GM12878 (cell line): ENCODE measurements at regions of chr21 and their contacts with region 1.

Region 1: DNA sequence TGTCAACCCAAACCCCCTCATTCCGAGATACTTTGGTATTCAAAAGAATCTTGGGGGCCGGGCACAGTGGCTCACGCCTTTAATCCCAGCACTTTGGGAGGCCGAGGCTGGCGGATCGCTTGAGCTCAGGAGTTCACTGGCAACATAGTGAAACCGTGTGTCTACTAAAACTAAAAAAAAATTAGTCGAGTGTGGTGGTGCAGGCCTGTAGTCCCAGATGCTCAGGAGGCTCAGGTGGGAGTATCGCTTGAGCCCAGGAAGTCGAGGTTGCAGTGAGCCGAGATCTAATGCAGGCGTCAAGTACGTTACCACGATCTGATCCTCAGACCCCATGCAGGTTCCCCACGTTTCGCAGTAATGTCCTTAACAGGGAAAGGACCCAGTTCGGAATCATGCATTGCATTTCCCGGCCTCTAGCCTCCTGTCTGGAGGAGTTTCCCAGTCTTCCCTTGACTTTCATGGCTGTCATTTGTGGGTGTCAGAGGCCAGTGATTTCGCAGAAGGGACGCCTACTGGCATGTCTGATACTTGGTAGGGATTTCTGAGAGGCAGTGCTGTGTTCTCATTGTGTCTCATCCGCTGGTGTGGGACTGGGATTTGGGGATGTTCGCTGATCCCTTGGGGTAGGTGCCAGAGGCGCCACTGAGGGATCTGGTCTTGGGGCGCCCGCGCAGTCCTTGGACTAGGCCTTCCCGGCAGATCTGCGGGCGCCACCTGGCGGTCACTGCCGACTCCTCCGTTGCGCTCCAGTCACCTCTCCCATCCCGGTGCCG is 39.3 kb upstream of the HMGN1 start:
- DNase-seq: no peak
- ATAC-seq: peak; percentile 89
- H3K4me3 ChIP-seq: peak overlapping the region; percentile 71
- H3K27ac ChIP-seq: peak overlapping the region; percentile 71
- H3K4me1 ChIP-seq: peaks cover 9% of the 10 kb centered on the region
- H3K27me3 ChIP-seq: no peaks in the 10 kb centered on the region
- CTCF ChIP-seq: peak; percentile 86 to 95 (median 90)
- EP300 ChIP-seq: no peak
- POLR2A ChIP-seq: peak; percentile 70
- RAD21 ChIP-seq: peak; percentile 76

Region 2: GRCh38 chr21:38733973-38734546 is 654.2 kb before region 1 on chr21:
- CTCF ChIA-PET with region 1: interaction called, 6 read pairs
- POLR2A ChIA-PET with region 1: interaction called, 12 read pairs
- RAD21 ChIA-PET with region 1: no interaction called
- SMC1A ChIA-PET with region 1: no interaction called
- in situ Hi-C with region 1: no loop called
- intact Hi-C with region 1: no loop called
- DNase-seq: peak; percentile 12
- ATAC-seq: peak; percentile 91
- H3K4me3 ChIP-seq: peak overlapping the region; percentile 49
- H3K27ac ChIP-seq: no peak overlapping the region
- H3K4me1 ChIP-seq: no peaks in the 10 kb centered on the region
- H3K27me3 ChIP-seq: no peaks in the 10 kb centered on the region; a peak in 1 of 4 replicates
- CTCF ChIP-seq: peak; percentile 90 to 94 (median 94); a peak in 5 of 6 replicates
- EP300 ChIP-seq: no peak
- POLR2A ChIP-seq: no peak
- RAD21 ChIP-seq: peak; percentile 93

Region 3: DNA sequence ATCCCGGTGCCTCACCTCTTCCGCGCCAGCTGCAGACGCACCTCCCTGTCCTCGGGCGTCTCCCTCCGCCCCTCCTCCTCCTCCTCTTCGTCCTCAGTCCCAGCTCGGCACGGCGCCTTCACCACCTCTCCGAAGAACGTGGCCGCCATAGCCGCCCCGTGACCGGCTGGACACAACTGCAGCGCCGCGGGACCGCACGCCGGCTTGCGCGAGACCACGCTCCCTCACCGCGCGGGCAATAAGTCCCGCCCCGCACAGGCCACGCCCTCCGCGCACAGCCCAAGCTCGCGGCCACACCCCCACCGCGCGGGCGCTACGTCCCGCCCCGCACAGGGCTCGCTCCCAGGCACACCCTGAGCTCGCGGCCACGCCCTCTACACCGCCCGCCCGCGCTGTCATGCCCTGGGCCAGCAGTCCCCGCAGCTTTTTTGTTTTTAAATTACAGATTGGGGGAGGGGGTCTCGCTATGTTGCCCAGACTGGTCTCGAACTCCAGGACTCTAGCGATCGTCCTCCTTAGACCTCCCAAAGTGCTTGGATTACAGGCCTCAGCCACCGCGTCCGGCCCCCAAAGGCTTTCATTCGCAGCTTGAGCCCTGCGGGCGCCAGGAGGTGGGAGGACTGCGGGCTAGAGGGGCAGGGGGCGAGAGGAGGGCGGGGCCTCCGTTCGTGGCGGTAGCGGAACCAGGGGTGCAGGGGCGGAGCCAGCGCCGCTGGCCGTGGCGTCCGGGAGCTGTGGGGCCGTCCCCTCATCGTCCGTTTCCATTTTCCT is 204.8 kb before region 1 on chr21 and contains the start of gene PSMG1:
- CTCF ChIA-PET with region 1: interaction called, 4 read pairs
- POLR2A ChIA-PET with region 1: interaction called, 3 read pairs
- RAD21 ChIA-PET with region 1: interaction called, 8 read pairs
- SMC1A ChIA-PET with region 1: interaction called, 3 read pairs
- in situ Hi-C with region 1: loop called (anchors 5 kb)
- intact Hi-C with region 1: loop called (anchors 5 kb)
- DNase-seq: peak; percentile 77
- ATAC-seq: peak; percentile 93
- H3K4me3 ChIP-seq: peak within 1 kb of the TSS; percentile 95
- H3K27ac ChIP-seq: peak within 1 kb of the TSS; percentile 88
- H3K4me1 ChIP-seq: peaks cover 26% of the 10 kb centered on the region
- H3K27me3 ChIP-seq: no peaks in the 10 kb centered on the region
- CTCF ChIP-seq: no peak
- EP300 ChIP-seq: no peak
- POLR2A ChIP-seq: peak; percentile 94
- RAD21 ChIP-seq: no peak
- polyA plus RNA-seq, gene PSMG1: 21.3 to 79.8 TPM

Region 4: GRCh38 chr21:39313571-39314142 is 74.6 kb before region 1 on chr21 and contains the start of gene BRWD1:
- CTCF ChIA-PET with region 1: interaction called, 9 read pairs
- POLR2A ChIA-PET with region 1: interaction called, 9 read pairs
- RAD21 ChIA-PET with region 1: interaction called, 3 read pairs
- SMC1A ChIA-PET with region 1: interaction called, 4 read pairs
- in situ Hi-C with region 1: no loop called
- intact Hi-C with region 1: loop called (anchors 5 kb)
- DNase-seq: no peak
- ATAC-seq: peak; percentile 77
- H3K4me3 ChIP-seq: peak within 1 kb of the TSS; percentile 85
- H3K27ac ChIP-seq: peak within 1 kb of the TSS; percentile 93
- H3K4me1 ChIP-seq: peaks cover 4% of the 10 kb centered on the region; the same call in 1 of the 2 replicates
- H3K27me3 ChIP-seq: no peaks in the 10 kb centered on the region
- CTCF ChIP-seq: peak; percentile 4 to 29 (median 16); a peak in 3 of 6 replicates
- EP300 ChIP-seq: 0 out of 4 replicates have a peak, but pooled peaks of 1 of the 2 experiments have one; percentile 4
- POLR2A ChIP-seq: peak; percentile 92
- RAD21 ChIP-seq: no peak
- polyA plus RNA-seq, gene BRWD1: 3.1 to 3.4 TPM

Region 5: DNA sequence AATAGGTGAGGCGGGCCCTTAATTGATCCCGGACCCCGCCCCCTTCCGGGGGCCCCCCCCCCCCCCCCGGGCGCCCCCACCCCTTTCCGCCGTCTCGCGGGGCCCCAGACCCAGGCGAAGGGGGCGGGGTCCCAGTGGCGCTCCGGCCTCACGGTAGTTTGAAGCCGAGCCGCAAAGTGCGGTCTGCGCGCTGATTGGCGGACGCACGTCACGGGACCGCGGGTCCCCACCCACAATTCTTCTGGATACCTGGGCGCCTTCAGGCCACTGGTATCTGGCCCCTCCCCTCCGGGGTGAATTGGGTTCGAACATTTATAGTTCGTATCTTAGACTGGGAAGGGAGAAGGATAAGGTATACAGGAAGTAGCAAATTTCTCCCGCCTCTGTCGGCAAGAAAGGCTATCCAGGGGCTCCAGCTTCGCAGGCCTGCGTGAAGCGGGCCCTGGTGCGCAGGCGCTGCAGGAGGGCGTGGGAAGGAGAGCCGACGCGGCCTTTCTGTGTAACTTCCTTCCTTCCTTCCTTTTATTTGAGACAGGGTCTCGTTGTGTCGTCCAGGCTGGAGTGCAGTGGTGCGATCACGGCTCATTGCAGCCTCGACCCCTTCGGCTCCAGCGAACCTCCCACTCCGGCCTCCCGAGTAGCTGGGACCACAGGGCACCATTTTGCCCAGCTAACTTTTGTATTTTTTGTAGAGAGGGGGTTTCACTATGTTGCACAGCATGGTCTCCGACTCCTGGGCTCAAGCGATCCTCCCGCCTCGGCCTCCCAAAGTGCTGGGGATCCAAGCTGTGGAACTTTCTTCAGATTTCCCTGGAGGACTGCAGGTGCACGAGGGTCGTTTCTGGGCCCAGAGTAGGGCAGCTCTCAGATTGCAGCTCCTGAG is 38.8 kb before region 1 on chr21:
- CTCF ChIA-PET with region 1: interaction called, 15 read pairs
- POLR2A ChIA-PET with region 1: interaction called, 11 read pairs
- RAD21 ChIA-PET with region 1: interaction called, 3 read pairs
- SMC1A ChIA-PET with region 1: interaction called, 4 read pairs
- in situ Hi-C with region 1: no loop called
- intact Hi-C with region 1: loop called (anchors 2 kb)
- DNase-seq: peak; percentile 82
- ATAC-seq: peak; percentile 92
- H3K4me3 ChIP-seq: peak overlapping the region; percentile 88
- H3K27ac ChIP-seq: peak overlapping the region; percentile 77
- H3K4me1 ChIP-seq: 0 out of 2 replicates have a peak, but pooled peaks cover 3% of the 10 kb centered on the region
- H3K27me3 ChIP-seq: no peaks in the 10 kb centered on the region
- CTCF ChIP-seq: no peak
- EP300 ChIP-seq: no peak
- POLR2A ChIP-seq: peak; percentile 92
- RAD21 ChIP-seq: no peak

Region 6: DNA sequence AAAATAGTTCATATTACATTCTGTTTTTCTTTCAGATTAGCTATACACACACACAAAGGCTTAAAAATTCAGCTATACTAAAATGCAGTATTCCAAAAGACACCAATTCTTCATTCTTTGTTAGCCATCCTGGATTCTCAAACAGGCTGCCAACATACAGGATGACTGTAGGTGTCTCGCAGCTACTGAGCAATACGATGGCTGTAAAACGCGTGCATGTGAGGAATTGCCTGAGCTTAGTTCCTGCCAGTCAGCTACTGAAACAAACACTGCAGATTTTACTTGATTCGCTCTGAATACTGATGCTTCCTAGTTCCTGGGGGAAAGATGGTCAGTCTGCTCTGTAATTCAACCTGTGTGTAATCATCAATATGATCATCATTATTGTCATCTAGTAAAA is 14.6 kb before region 1 on chr21:
- CTCF ChIA-PET with region 1: interaction called, 23 read pairs
- POLR2A ChIA-PET with region 1: no interaction called
- RAD21 ChIA-PET with region 1: interaction called, 7 read pairs
- SMC1A ChIA-PET with region 1: interaction called, 6 read pairs
- in situ Hi-C with region 1: no loop called
- intact Hi-C with region 1: no loop called
- DNase-seq: no peak
- ATAC-seq: peak; percentile 81
- H3K4me3 ChIP-seq: no peak overlapping the region
- H3K27ac ChIP-seq: no peak overlapping the region
- H3K4me1 ChIP-seq: peaks cover 4% of the 10 kb centered on the region
- H3K27me3 ChIP-seq: no peaks in the 10 kb centered on the region
- CTCF ChIP-seq: peak; percentile 31 to 46 (median 38); a peak in 5 of 6 replicates
- EP300 ChIP-seq: no peak
- POLR2A ChIP-seq: no peak
- RAD21 ChIP-seq: peak; percentile 56

Region 7: DNA sequence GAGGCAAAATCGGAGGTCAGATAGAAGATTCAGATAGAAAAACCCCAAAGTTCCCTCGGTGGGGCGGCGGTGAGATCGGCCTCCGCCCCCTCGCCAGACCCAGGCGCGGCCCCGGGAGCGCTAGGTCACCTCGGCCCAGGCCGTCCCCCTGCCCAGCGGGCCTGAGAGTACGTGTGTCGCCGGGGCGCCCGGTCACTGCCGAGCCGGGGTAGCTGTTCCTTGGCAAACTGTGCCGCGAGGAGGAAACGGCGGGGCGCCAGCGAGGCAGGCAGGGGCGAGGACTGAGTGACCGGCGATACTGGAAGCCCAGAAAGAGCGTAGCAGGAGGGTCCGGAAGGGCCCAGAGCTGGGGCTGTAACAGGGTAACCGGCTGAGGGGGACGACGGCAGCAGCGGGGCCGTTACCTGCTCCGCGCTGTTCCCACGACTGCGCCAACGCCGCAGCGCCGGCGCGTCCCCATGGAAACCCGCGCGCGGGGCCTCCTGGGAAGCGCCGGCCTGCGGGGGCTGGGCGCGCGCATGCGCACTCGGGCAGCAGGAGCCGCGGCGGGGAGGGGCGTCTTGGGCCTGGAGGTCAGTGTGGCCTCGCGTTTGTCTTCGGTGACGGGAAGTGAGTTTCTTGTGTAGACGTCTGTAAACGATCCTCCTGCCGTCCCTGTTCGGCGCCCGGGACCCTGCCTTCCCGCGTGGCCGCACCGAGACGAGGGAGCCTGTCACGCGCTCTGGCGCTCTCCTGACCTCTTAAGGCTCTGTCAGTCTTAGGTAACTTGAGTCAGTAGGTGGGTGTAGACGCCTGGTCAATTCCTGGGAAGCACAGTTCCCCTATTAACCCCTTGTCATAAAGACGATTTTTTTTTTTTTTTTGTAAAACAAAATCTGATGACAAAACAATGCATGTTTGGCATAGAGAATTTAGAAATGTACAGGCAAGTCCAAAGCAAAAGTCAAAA is 57.4 kb after region 1 on chr21 and contains the start of gene LCA5L:
- CTCF ChIA-PET with region 1: interaction called, 9 read pairs
- POLR2A ChIA-PET with region 1: no interaction called
- RAD21 ChIA-PET with region 1: interaction called, 10 read pairs
- SMC1A ChIA-PET with region 1: interaction called, 4 read pairs
- in situ Hi-C with region 1: no loop called
- intact Hi-C with region 1: no loop called
- DNase-seq: peak; percentile 47
- ATAC-seq: peak; percentile 94
- H3K4me3 ChIP-seq: peak within 1 kb of the TSS; percentile 89
- H3K27ac ChIP-seq: peak within 1 kb of the TSS; percentile 81
- H3K4me1 ChIP-seq: peaks cover 4% of the 10 kb centered on the region
- H3K27me3 ChIP-seq: no peaks in the 10 kb centered on the region; a peak in 1 of 4 replicates
- CTCF ChIP-seq: peak in 2 of 3 experiments; percentile 9 to 41; a peak in 2 of 6 replicates
- EP300 ChIP-seq: no peak
- POLR2A ChIP-seq: peak; percentile 89
- RAD21 ChIP-seq: no peak
- polyA plus RNA-seq, gene LCA5L: 0.22 to 0.55 TPM

Region 8: GRCh38 chr21:39461419-39461818 is 73.2 kb after region 1 on chr21:
- CTCF ChIA-PET with region 1: no interaction called
- POLR2A ChIA-PET with region 1: no interaction called
- RAD21 ChIA-PET with region 1: no interaction called
- SMC1A ChIA-PET with region 1: no interaction called
- in situ Hi-C with region 1: no loop called
- intact Hi-C with region 1: no loop called
- DNase-seq: peak; percentile 17
- ATAC-seq: peak; percentile 90
- H3K4me3 ChIP-seq: no peak overlapping the region
- H3K27ac ChIP-seq: no peak overlapping the region
- H3K4me1 ChIP-seq: no peaks in the 10 kb centered on the region
- H3K27me3 ChIP-seq: no peaks in the 10 kb centered on the region
- CTCF ChIP-seq: no peak
- EP300 ChIP-seq: no peak
- POLR2A ChIP-seq: no peak
- RAD21 ChIP-seq: no peak